Esophagus squamous epithelium (tissue), 5 donors: ENCODE measurements at regions of chr7 and their contacts with region 1.

Region 1: GRCh38 chr7:102236592-102237287 is 49.9 kb upstream of the SH2B2 start:
- DNase-seq: no peak
- H3K4me3 ChIP-seq: no peak overlapping the region
- H3K27ac ChIP-seq: no peak overlapping the region
- H3K4me1 ChIP-seq: no peaks in the 10 kb centered on the region
- H3K27me3 ChIP-seq: no peaks in the 10 kb centered on the region
- CTCF ChIP-seq: peak; percentile 59 to 84 (median 78)
- POLR2A ChIP-seq: no peak

Region 2: DNA sequence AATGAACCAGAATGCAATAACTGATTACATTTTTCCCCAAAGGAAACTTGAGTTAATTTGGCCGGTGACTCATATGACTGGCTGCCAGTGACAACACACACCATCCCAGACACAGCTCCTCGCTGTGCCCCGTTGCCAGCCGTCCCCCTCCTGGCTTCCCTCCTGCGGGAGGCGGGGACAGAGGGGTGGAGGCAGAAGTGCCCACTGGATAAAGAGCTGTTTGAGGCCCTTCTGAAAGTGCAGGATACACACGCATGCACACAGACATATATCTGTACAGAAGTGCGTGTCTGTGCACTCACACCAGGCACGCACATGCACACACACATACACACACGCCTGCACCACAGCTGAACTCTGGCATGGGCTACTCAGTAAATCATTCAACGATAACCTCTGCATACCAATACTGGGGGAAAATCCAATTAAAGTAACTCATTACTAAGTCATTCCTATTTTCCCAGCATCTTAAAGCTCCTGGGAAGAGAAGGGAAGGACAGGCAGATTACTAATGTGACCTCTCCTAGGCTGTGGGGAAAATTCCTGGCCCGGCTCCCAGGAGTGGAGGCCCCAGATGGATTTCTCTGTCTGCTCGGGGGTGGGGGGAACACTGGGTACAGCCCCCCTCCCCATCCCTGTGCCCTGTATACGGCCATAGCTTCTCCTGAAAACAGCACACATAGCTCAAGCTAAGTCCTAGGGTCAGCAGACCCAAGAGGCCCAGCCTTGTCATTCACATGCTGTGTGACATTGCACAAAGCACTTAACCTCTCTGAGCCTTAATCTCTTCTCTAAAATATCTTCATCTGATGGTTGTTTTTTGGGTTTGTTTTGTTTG is 555.4 kb before region 1 on chr7:
- intact Hi-C with region 1: loop called (anchors 5 kb)
- DNase-seq: no peak
- H3K4me3 ChIP-seq: peak overlapping the region in 1 of 4 donors; percentile 5
- H3K27ac ChIP-seq: peak overlapping the region in 1 of 4 donors; percentile 18
- H3K4me1 ChIP-seq: peaks cover 0 to 22% (median 11%) of the 10 kb centered on the region in 3 donors
- H3K27me3 ChIP-seq: no peaks in the 10 kb centered on the region
- CTCF ChIP-seq: no peak
- POLR2A ChIP-seq: no peak

Region 3: GRCh38 chr7:101823096-101823495 is 413.6 kb before region 1 on chr7:
- intact Hi-C with region 1: loop called (anchors 10 kb)
- DNase-seq: no peak
- H3K4me3 ChIP-seq: no peak overlapping the region
- H3K27ac ChIP-seq: peak overlapping the region in 3 of 4 donors; percentile 23 to 42 (median 36)
- H3K4me1 ChIP-seq: peaks cover 0 to 49% (median 11%) of the 10 kb centered on the region in 3 donors
- H3K27me3 ChIP-seq: no peaks in the 10 kb centered on the region
- CTCF ChIP-seq: no peak
- POLR2A ChIP-seq: no peak